Gastrocnemius medialis (tissue), 4 donors: ENCODE measurements at regions of chrX and their contacts with region 1.

Region 1: GRCh38 chrX:43836435-43837184 is 45.6 kb downstream of the MAOB start:
- DNase-seq: no peak
- ATAC-seq: no peak
- H3K4me3 ChIP-seq: no peak overlapping the region
- H3K27ac ChIP-seq: peak overlapping the region in 2 of 4 donors; percentile 13 to 52
- H3K4me1 ChIP-seq: peaks cover 3 to 4% of the 10 kb centered on the region in 2 donors
- H3K27me3 ChIP-seq: peaks cover 0 to 4% (median 0%) of the 10 kb centered on the region in 3 donors
- CTCF ChIP-seq: peak; percentile 40 to 69 (median 62)
- POLR2A ChIP-seq: no peak

Region 2: GRCh38 chrX:42602136-42602535 is 1234.5 kb before region 1 on chrX:
- in situ Hi-C with region 1: no loop called
- intact Hi-C with region 1: no loop called
- DNase-seq: no peak
- ATAC-seq: no peak
- H3K4me3 ChIP-seq: no peak overlapping the region
- H3K27ac ChIP-seq: no peak overlapping the region
- H3K4me1 ChIP-seq: no peaks in the 10 kb centered on the region
- H3K27me3 ChIP-seq: no peaks in the 10 kb centered on the region
- CTCF ChIP-seq: no peak
- POLR2A ChIP-seq: no peak

Region 3: GRCh38 chrX:43899878-43900815 is 63.5 kb after region 1 on chrX:
- in situ Hi-C with region 1: no loop called
- intact Hi-C with region 1: loop called (anchors 5 kb)
- DNase-seq: peak; percentile 17 to 57
- ATAC-seq: peak; percentile 83 to 92
- H3K4me3 ChIP-seq: no peak overlapping the region
- H3K27ac ChIP-seq: peak overlapping the region; percentile 71 to 84 (median 78)
- H3K4me1 ChIP-seq: peaks cover 4 to 14% of the 10 kb centered on the region in 2 donors
- H3K27me3 ChIP-seq: no peaks in the 10 kb centered on the region
- CTCF ChIP-seq: no peak
- POLR2A ChIP-seq: no peak

Region 4: DNA sequence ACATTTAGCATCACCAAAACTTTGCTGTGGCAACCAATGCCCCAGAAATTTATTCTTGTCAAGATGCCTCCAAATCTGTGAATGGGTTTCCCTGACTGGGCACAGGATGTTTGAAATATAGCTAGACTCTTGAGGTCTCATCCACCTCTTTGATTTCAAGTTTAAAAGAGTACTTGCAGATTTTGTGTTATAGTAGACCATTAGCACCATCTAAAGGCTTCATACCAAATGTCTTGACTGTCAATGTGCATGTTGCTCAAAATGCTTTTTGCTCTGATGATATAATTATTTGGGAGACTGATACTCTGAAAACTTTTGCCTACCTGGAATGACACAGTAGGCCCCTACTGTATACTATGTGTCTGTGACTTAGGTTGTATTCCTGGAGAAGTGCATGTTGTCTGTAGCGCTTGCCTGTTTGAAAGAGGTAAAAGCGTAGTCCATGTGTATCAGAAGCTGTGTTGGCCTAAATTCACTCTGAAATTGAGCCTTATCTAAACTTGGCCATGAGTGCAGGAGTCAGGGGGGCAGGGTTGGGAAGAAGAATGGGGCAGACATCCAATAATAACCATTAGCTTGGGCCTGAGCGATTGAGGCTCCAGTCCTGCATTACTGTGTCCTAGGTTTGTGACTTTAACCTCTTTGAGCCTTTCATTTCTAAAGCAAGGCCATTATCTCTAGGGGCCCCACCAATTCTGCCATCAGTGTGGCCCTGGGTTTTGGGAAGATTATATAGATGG is 102.7 kb after region 1 on chrX:
- in situ Hi-C with region 1: loop called in 3 of 4 experiments (anchors 5 to 10 kb)
- intact Hi-C with region 1: loop called (anchors 1 kb)
- DNase-seq: no peak
- ATAC-seq: peak in 1 of 2 donors; percentile 56
- H3K4me3 ChIP-seq: no peak overlapping the region
- H3K27ac ChIP-seq: no peak overlapping the region
- H3K4me1 ChIP-seq: no peaks in the 10 kb centered on the region
- H3K27me3 ChIP-seq: no peaks in the 10 kb centered on the region
- CTCF ChIP-seq: peak in 4 of 5 experiments; percentile 18 to 43 (median 38)
- POLR2A ChIP-seq: no peak

Region 5: DNA sequence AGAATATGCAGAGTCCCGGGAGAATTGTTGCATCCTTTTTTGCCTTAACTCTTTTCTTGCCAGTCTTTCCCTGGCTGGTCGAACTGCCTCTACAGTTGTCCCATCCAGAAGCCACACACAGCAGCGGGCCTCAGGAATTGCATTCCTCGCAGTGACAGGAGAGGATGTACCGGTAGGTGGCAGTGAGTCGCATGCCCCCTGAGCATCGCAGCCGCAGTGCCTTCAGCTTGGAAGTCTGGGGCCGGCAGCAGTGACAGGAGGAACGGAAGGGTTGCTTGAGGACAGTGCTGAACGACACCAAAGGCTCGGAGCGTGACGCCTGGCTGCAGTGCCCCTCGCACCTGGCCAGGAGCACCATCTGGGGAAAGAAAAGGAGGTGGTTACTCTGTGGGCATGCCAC is 113.1 kb after region 1 on chrX:
- in situ Hi-C with region 1: loop called in 2 of 4 experiments (anchors 5 kb)
- intact Hi-C with region 1: no loop called
- DNase-seq: no peak
- ATAC-seq: no peak
- H3K4me3 ChIP-seq: no peak overlapping the region
- H3K27ac ChIP-seq: no peak overlapping the region
- H3K4me1 ChIP-seq: no peaks in the 10 kb centered on the region
- H3K27me3 ChIP-seq: no peaks in the 10 kb centered on the region
- CTCF ChIP-seq: peak in 2 of 5 experiments; percentile 12 to 51
- POLR2A ChIP-seq: no peak

Region 6: DNA sequence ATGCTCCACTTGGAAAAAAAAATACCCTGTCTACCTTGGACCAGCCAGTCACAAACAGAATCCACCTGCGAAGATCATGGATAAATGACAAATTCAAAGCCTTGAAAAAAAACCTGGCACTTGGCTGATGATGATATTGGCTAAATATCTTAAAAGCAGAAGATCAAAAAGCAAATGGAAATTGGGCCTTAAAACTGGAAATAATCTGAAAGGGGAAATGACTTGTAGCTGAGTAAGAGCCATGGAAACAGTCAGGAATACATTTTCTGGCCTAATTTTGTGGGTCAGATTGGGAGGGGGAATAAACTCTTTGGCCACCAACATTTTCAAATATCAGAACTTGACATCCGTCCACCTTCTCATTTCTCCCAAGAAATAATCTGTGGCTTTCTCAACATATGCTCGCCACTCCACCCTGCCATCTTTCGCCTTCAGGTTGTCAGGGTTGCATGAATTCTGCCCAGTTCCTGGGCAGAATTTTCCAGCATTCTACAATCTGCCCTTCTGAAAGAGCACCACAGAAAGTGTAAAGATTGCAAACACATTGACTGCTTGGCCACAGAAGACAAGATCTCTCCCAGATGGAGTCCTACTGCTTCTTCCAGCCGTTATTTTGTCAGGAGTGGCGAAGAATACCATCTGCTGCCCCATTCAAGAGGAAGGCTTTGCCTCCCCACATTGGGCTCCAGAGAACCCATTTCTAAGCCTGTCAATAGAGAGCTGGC is 138.3 kb after region 1 on chrX:
- in situ Hi-C with region 1: no loop called
- intact Hi-C with region 1: no loop called
- DNase-seq: no peak
- ATAC-seq: no peak
- H3K4me3 ChIP-seq: no peak overlapping the region
- H3K27ac ChIP-seq: no peak overlapping the region
- H3K4me1 ChIP-seq: no peaks in the 10 kb centered on the region
- H3K27me3 ChIP-seq: peaks cover 0 to 18% (median 0%) of the 10 kb centered on the region in 3 donors
- CTCF ChIP-seq: no peak
- POLR2A ChIP-seq: no peak